AG04450 (cell line): ENCODE measurements at regions of chr4 and their contacts with region 1.

Region 1: DNA sequence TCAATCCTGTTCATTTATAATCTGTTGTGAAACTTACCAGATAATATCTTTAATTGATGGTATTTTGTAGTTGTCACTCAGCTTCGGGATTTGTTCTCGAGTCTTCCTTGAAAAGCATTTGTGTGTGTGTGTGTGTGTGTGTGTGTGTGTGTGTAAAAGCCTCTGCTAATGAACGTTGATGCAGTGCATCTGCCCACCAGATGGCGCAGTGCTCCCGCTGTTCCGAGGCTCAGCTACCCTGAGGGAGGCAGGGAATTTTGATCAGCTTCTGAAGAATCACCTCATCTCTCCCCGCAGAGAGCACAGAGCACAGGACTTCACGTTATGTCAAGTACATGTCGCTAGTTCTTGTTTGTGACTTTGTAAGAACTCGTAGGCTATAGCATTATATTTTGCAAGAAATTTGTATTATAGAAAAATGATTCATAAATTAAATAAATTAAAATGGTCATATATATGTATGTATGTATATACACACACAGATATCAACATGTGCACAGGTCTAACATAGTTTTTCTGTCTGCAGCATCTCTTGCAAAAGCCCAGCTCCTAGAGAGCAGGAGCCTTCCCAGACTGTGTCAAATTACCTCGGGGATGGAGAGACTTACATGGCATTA is 316.7 kb upstream of the IGFBP7 start:
- DNase-seq: peak; percentile 36
- H3K4me3 ChIP-seq: no peak overlapping the region
- H3K27ac ChIP-seq: no peak overlapping the region
- H3K27me3 ChIP-seq: no peaks in the 10 kb centered on the region
- CTCF ChIP-seq: peak; percentile 83

Region 2: GRCh38 chr4:56863441-56864139 is 563.3 kb before region 1 on chr4:
- CTCF ChIA-PET with region 1: no interaction called
- POLR2A ChIA-PET with region 1: no interaction called
- DNase-seq: no peak
- H3K4me3 ChIP-seq: no peak overlapping the region
- H3K27ac ChIP-seq: no peak overlapping the region
- H3K27me3 ChIP-seq: no peaks in the 10 kb centered on the region
- CTCF ChIP-seq: no peak

Region 3: GRCh38 chr4:57303012-57303751 is 123.7 kb before region 1 on chr4:
- CTCF ChIA-PET with region 1: no interaction called
- POLR2A ChIA-PET with region 1: no interaction called
- DNase-seq: no peak
- H3K4me3 ChIP-seq: no peak overlapping the region
- H3K27ac ChIP-seq: no peak overlapping the region
- H3K27me3 ChIP-seq: no peaks in the 10 kb centered on the region
- CTCF ChIP-seq: no peak

Region 4: DNA sequence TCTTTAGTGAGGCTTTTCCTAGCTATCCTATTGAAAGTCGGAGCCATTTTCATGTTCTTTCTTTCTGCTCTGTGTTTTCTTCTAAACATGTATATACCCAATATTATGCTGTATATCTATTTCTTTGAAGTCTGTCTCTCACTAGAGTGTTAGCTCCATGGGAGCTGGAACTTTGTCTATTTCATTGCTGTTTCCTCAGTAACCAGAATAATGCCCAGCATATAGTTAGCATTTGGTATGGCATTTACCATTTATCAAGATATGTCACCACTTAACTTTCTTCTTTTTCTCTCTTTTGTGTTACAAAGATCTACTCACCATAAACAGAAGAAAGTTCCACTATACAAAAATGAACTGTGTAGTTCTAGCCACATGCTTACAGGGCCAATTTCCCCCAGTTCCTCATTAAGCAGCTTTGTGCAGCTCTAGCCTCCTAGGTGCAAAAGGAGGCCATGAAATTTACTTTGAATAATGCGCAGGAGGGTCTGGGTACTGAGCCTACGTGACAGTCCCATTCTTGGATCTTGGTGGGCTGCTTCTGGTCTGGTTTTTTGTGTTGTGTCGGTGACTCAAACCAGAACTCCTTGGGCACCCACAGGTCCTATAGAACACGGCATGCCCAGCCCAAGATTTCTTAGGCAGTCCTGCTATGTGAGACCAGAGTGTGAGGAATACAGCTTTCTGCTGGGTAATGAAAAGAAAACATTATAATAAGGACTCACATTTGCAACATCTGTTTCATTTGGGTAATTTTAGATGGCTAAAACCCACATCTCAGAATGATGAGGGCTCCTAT is 14.4 kb before region 1 on chr4:
- CTCF ChIA-PET with region 1: interaction called, 18 read pairs
- POLR2A ChIA-PET with region 1: no interaction called
- DNase-seq: no peak
- H3K4me3 ChIP-seq: no peak overlapping the region
- H3K27ac ChIP-seq: no peak overlapping the region
- H3K27me3 ChIP-seq: no peaks in the 10 kb centered on the region
- CTCF ChIP-seq: no peak

Region 5: DNA sequence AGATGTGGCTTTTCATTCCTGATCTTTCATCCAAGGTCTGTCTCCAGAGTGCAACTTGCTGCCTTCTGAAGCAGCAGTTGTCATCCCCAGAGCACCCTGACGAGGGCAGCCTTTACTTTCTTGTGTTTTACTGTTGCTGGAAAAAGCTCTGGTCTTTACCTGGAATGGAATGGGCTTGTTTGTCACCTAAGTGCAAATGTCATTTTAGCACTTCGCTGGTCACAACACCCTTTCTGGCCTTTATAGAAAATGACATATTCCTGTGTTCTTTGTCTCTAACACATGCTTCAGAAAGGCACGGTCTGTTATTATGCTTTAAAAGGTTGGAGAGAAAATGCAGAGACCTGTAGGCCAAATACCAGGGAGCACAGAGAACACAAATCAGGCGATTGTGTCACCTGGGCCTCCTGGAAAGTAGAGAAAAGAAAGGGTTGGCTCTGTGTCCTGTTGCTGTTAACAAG is 16.0 kb after region 1 on chr4:
- CTCF ChIA-PET with region 1: interaction called, 14 read pairs
- POLR2A ChIA-PET with region 1: no interaction called
- DNase-seq: no peak
- H3K4me3 ChIP-seq: no peak overlapping the region
- H3K27ac ChIP-seq: no peak overlapping the region
- H3K27me3 ChIP-seq: no peaks in the 10 kb centered on the region
- CTCF ChIP-seq: peak; percentile 70